Naive thymus-derived CD4-positive, alpha-beta T cell (primary cell): ENCODE measurements at regions of chr10 and their contacts with region 1.

Region 1: DNA sequence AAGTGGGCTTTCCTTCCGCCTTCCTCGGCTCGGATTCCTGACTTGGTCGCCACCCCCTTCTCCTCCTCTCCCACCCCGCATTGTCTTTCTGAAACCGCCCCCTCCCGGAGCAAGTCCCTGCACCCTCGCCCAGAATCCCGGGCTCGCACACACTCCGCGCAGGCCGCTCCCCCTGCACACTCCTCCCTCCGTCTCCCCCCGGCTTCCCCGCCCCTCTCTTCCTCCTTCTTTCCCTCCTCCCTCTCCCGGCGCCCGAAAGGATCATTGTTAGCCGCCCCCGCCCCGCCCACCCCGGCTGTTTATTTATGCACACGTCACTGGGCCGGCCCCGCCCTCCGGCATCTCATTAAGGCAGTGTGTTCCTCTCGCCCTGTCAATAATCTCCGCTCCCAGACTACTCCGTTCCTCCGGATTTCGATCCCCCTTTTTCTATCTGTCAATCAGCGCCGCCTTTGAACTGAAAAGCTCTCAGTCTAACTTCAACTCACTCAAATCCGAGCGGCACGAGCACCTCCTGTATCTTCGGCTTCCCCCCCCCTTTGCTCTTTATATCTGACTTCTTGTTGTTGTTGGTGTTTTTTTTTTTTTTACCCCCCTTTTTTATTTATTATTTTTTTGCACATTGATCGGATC is at the start of gene TCF7L2:
- DNase-seq: peak; percentile 24 to 62 (median 43)
- ATAC-seq: peak; percentile 79
- H3K4me3 ChIP-seq: peak within 1 kb of the TSS; percentile 62
- H3K4me3 Mint-ChIP-seq: peak within 1 kb of the TSS; percentile 84 to 98 (median 94)
- H3K27ac ChIP-seq: peak within 1 kb of the TSS; percentile 22
- H3K27ac Mint-ChIP-seq: peak within 1 kb of the TSS; percentile 52 to 94 (median 79)
- H3K4me1 ChIP-seq: peaks cover 0 to 3% of the 10 kb centered on the region in 2 donors
- H3K4me1 Mint-ChIP-seq: peaks cover 14 to 39% (median 25%) of the 10 kb centered on the region in 7 donors
- H3K27me3 ChIP-seq: peaks cover 0 to 3% of the 10 kb centered on the region in 2 donors
- H3K27me3 Mint-ChIP-seq: peaks cover 13 to 79% (median 25%) of the 10 kb centered on the region in 5 donors
- total RNA-seq, gene TCF7L2: 0.39 to 31.4 (median 3.5) TPM

Region 2: GRCh38 chr10:112183329-112184051 is 766.5 kb before region 1 on chr10 and contains the start of gene GPAM:
- CTCF ChIA-PET with region 1: no interaction called
- POLR2A ChIA-PET with region 1: no interaction called
- intact Hi-C with region 1: loop called in 1 of 2 experiments (anchors 2 kb)
- DNase-seq: peak; percentile 93 to 100 (median 97)
- ATAC-seq: peak; percentile 100
- H3K4me3 ChIP-seq: peak within 1 kb of the TSS; percentile 88
- H3K4me3 Mint-ChIP-seq: peak within 1 kb of the TSS; percentile 87 to 98 (median 92)
- H3K27ac ChIP-seq: peak within 1 kb of the TSS; percentile 75
- H3K27ac Mint-ChIP-seq: peak within 1 kb of the TSS; percentile 84 to 99 (median 94)
- H3K4me1 ChIP-seq: peaks cover 7 to 8% of the 10 kb centered on the region in 2 donors
- H3K4me1 Mint-ChIP-seq: peaks cover 13 to 34% (median 27%) of the 10 kb centered on the region in 7 donors
- H3K27me3 ChIP-seq: no peaks in the 10 kb centered on the region
- H3K27me3 Mint-ChIP-seq: peaks cover 0 to 11% (median 0%) of the 10 kb centered on the region in 5 donors
- total RNA-seq, gene GPAM: 3.7 to 11.3 (median 6.6) TPM

Region 3: DNA sequence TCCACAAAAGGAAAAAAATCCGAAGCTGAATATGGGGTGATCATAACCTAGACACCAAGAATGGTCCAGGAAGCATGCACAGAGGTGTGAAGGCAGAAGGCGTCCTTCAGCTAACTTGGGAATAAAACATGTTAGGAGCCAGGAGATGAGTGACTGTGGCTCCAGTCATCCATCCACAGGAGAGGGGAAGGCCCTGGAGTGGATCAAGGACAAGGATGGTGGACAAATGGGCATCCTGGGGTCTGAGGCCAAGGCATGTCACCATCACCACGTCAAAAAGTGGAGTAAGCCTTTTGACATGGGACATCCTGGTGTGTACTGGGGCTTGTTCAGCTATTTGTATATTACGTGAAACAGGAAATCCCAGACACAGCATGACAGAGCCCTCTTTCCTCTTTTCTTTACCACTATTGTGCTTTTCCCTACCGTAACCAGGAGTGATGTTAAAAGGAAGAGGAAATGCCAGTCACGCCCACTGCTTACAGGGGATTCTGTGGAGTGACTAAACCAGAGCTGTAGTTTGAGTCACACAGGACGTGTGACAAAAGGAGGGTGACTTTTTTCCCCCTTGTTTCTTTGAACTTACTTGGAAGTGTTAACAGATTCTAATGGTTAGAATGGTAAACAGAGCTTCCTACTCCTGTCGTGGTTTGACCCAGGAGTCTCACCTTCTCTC is 560.7 kb before region 1 on chr10:
- CTCF ChIA-PET with region 1: no interaction called
- POLR2A ChIA-PET with region 1: no interaction called
- intact Hi-C with region 1: loop called in 1 of 2 experiments (anchors 10 kb)
- DNase-seq: peak in 8 of 9 donors; percentile 14 to 51 (median 23)
- ATAC-seq: peak; percentile 94
- H3K4me3 ChIP-seq: no peak overlapping the region
- H3K4me3 Mint-ChIP-seq: peak overlapping the region in 7 of 10 donors; percentile 25 to 56 (median 43)
- H3K27ac ChIP-seq: no peak overlapping the region
- H3K27ac Mint-ChIP-seq: peak overlapping the region; percentile 31 to 75 (median 73)
- H3K4me1 ChIP-seq: peaks cover 8 to 30% of the 10 kb centered on the region in 2 donors
- H3K4me1 Mint-ChIP-seq: peaks cover 44 to 78% (median 65%) of the 10 kb centered on the region in 7 donors
- H3K27me3 ChIP-seq: no peaks in the 10 kb centered on the region
- H3K27me3 Mint-ChIP-seq: no peaks in the 10 kb centered on the region

Region 4: DNA sequence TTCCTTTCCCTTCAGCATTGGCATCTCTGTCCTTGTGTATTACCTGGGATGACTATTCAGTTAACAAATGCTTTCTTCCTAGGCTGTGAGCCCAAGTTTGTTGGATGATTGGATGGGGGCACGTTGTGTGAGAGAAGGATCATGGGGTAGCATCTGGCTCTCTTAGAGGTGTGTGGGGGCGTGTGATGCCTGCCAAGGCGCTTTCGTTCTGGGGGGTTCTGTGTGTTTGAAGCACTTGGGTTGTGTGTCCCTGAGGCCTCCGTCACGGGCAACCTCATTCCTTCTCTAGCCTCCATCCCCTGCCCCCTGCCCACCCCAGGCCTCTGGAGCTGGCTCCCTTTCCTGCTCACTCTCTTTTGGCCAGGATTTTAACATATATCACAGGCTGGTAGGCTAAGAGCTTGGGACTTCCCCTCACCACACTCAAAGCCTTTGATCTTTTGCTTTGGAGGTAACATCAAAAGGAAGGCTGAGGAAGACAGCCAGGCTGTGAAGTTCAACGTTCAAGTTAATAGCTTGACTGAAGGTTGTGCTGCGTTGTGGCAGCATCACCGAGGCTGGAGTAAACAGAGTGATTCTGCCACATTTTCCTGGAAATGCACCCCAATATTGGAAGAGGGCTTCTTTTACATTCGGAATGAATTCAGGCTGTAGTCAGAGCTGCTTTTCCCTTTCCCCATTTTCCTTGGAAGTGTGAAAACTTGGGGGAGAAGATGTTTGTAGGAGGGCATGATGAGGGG is 57.2 kb after region 1 on chr10:
- CTCF ChIA-PET with region 1: no interaction called
- POLR2A ChIA-PET with region 1: no interaction called
- intact Hi-C with region 1: loop called in 1 of 2 experiments (anchors 1 kb)
- DNase-seq: peak in 8 of 9 donors; percentile 21 to 82 (median 72)
- ATAC-seq: peak; percentile 93
- H3K4me3 ChIP-seq: peak overlapping the region; percentile 44
- H3K4me3 Mint-ChIP-seq: peak overlapping the region; percentile 63 to 89 (median 80)
- H3K27ac ChIP-seq: no peak overlapping the region
- H3K27ac Mint-ChIP-seq: peak overlapping the region in 5 of 9 donors; percentile 17 to 81 (median 41)
- H3K4me1 ChIP-seq: peaks cover 25 to 34% of the 10 kb centered on the region in 2 donors
- H3K4me1 Mint-ChIP-seq: peaks cover 15 to 38% (median 29%) of the 10 kb centered on the region in 7 donors
- H3K27me3 ChIP-seq: peaks cover 0 to 6% of the 10 kb centered on the region in 2 donors
- H3K27me3 Mint-ChIP-seq: peaks cover 32 to 85% (median 56%) of the 10 kb centered on the region in 5 donors